Activated T-helper 1 cell treated with anti-CD3 and anti-CD28 coated beads, Interleukin-12 subunit alpha, Interleukin-12 subunit beta, Interleukin-2, Interleukin-4 antibody, amounts not matched to agents 30 ng/mL and 10 ng/mL and 1 ng/mL, durations not matched to agents 14 hours and 24 hours and 36 hours (primary cell): ENCODE measurements at regions of chr5 and their contacts with region 1.

Region 1: DNA sequence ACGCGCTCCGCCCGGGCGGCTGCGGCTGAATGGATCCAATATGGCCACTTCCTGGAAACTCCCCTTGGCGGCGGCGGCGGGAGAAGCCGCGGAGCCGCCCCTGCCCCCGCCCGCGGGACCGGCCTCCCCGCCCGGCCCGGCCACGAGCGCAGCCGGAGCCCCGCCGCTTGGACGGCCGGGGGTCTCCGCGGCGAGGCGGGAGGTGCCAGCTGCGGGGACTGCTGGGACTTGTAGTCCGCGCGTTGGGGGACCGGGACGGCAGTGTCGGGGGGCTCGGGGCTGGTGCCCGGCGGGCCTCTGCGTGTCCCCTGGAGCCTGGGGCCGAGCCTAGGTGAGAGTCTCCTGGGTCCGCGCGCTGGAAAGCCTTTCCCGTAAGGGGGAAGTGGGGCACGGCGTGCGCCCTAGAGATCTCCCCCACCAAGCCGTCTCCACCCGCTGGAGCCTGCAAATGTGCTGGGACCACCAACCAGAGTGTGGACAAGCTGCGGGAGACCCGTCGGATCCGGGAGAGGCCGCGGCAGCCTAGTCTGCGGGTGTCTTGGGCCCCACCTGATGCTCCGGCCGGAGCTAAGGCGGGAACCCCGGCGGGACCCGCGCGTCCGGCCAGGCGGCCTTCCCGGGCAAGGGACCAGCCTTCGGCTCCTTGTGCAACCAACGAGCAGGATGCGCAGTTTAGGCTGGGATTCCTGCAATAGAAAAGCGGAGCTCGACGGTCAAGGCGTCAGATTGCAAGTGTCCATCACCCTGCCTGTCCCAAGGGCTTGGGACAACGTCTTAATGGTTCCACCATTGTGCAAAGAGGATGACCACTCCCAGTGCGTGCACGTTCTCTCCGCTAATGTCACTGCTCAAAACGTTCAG is at the start of gene SEPTIN8:
- DNase-seq: peak; percentile 43
- H3K4me3 Mint-ChIP-seq: peak within 1 kb of the TSS; percentile 87
- H3K27ac Mint-ChIP-seq: peak within 1 kb of the TSS; percentile 63
- H3K4me1 Mint-ChIP-seq: peaks cover 41% of the 10 kb centered on the region
- H3K27me3 Mint-ChIP-seq: peaks cover 45% of the 10 kb centered on the region
- total RNA-seq, gene SEPTIN8: 45.8 and 46.2 TPM in 2 replicates

Region 2: GRCh38 chr5:132753135-132753987 is 24.1 kb before region 1 on chr5:
- intact Hi-C with region 1: loop called (anchors 1 kb)
- DNase-seq: no peak
- H3K4me3 Mint-ChIP-seq: peak overlapping the region; percentile 35
- H3K27ac Mint-ChIP-seq: peak overlapping the region; percentile 90
- H3K4me1 Mint-ChIP-seq: peaks cover 72% of the 10 kb centered on the region
- H3K27me3 Mint-ChIP-seq: peaks cover 3% of the 10 kb centered on the region

Region 3: GRCh38 chr5:132761321-132762215 is 15.9 kb before region 1 on chr5:
- intact Hi-C with region 1: loop called (anchors 2 kb)
- DNase-seq: no peak
- H3K4me3 Mint-ChIP-seq: no peak overlapping the region
- H3K27ac Mint-ChIP-seq: peak overlapping the region; percentile 40
- H3K4me1 Mint-ChIP-seq: no peaks in the 10 kb centered on the region
- H3K27me3 Mint-ChIP-seq: no peaks in the 10 kb centered on the region